ENCODE measurements at regions of chr19 and their contacts with region 1.

Region 1: GRCh38 chr19:39946532-39946931 is 12.1 kb upstream of the FCGBP start:
- DNase-seq: no peak
- H3K4me3 ChIP-seq: no peak overlapping the region
- H3K27ac ChIP-seq: no peak overlapping the region
- H3K4me1 ChIP-seq: no peaks in the 10 kb centered on the region
- H3K27me3 ChIP-seq: no peaks in the 10 kb centered on the region
- CTCF ChIP-seq: no peak
- EP300 ChIP-seq: no peak
- POLR2A ChIP-seq: no peak

Region 2: DNA sequence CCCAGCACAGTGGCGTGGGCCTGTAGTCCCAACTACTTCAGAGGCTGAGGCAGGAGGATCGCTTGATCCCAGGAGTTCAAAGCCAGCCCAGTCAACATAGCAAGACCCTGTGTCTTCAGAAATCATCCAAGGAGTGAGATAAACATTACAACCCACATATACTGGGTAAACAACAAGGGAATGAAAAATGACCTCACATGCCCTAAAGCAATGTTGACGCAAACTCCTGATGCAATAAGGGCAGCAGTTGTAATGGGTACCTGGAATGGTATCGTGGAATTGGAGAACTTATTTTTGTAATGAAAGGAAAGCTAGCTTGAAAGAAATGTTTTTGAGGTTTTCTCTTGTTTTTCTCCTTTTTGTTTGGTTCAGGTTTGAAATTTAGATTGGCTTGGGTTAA is 315.4 kb before region 1 on chr19:
- intact Hi-C with region 1: no loop called
- DNase-seq: no peak
- H3K4me3 ChIP-seq: no peak overlapping the region
- H3K27ac ChIP-seq: no peak overlapping the region
- H3K4me1 ChIP-seq: no peaks in the 10 kb centered on the region
- H3K27me3 ChIP-seq: no peaks in the 10 kb centered on the region
- CTCF ChIP-seq: no peak
- EP300 ChIP-seq: no peak
- POLR2A ChIP-seq: no peak

Region 3: DNA sequence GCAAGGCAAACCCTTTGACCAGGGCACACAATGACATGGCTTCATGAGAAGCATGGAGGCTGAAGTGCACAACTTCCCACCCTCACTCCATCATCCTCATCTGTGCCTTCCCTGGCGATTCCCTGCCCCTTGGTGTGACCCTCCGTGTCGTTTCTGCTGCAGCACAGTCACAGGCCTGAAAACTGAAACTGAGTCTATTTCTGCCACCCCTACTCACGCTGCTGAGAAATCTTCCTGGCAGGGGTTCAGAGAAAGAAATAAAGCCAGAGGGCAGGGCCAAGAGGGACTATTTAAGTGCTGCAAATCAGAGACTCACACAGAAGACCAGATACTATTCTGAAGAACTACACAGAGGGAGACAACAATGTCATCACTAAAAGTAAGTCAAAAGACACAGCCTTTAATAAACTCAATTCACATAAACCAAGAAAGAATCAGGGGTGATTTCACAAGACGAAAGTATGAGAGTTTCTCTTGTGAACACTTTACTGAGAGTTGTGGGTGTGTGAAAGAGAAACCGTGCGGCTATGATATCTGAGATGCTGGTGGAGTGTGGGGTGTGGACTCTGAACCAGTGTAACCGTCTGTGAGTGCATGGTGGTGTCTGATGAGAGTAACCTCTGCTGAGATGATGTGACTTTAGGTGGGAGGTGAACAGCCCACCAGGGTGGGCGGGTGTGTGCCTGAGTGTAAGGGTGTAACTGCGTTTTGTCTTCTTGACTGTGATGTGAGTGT is 267.3 kb before region 1 on chr19:
- intact Hi-C with region 1: loop called in 1 of 4 experiments (anchors 5 kb)
- DNase-seq: no peak
- H3K4me3 ChIP-seq: no peak overlapping the region
- H3K27ac ChIP-seq: no peak overlapping the region
- H3K4me1 ChIP-seq: no peaks in the 10 kb centered on the region
- H3K27me3 ChIP-seq: no peaks in the 10 kb centered on the region
- CTCF ChIP-seq: no peak
- EP300 ChIP-seq: no peak
- POLR2A ChIP-seq: no peak